ENCODE measurements at regions of chr6 and their contacts with region 1.

Region 1: DNA sequence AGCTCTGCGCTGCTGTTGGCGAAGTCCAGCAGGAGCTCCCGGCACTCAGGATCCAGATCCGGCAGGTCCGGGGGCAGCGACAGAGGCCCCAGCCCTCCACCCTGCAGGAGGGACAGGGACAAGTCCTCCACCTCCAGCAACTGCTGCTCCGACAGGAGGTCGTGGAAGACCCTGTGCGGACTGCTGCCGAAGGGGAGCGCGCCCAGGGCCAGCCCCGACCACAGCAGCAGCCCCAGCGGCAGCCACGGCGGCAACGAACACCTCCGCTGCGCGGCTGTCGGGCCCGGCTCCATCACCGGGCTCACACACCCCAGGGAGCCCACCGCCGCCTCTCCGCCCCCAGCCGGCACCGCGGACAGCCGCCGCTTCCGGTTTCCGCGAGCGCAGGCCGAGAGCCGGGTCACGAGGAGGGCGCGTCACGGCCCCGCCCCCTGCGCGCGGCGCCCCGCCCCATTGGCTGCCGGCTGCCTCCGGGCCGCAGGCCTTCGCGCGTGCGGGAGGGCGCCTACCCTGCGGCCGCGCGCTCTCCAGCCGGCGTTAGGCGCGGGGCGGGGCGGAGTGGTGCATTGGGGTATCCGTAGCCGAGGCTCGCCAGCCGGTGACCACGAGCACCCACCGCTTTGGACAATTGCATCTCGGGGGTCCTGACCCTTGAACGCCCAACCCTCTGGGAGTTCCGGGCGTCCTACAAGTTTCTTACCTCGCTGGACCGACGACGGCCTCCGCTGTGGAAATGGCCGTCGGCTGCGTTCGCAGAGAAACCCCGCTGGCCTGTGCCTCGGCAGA is at the start of gene OSTM1:
- DNase-seq: peak; percentile 32 to 95
- H3K4me3 ChIP-seq: peak within 1 kb of the TSS; percentile 87 to 89
- H3K27ac ChIP-seq: peak within 1 kb of the TSS; percentile 74 to 78
- H3K4me1 ChIP-seq: peaks cover 3 to 10% of the 10 kb centered on the region in 2 donors
- H3K27me3 ChIP-seq: no peaks in the 10 kb centered on the region
- CTCF ChIP-seq: no peak
- total RNA-seq, gene OSTM1: 78.7 TPM

Region 2: GRCh38 chr6:108260809-108261569 is 186.4 kb after region 1 on chr6 and contains the start of gene SNX3:
- intact Hi-C with region 1: loop called (anchors 5 kb)
- DNase-seq: peak; percentile 91 to 98
- H3K4me3 ChIP-seq: peak within 1 kb of the TSS; percentile 88 to 91
- H3K27ac ChIP-seq: peak within 1 kb of the TSS; percentile 93 to 95
- H3K4me1 ChIP-seq: peaks cover 0 to 12% of the 10 kb centered on the region in 2 donors
- H3K27me3 ChIP-seq: no peaks in the 10 kb centered on the region
- CTCF ChIP-seq: no peak
- total RNA-seq, gene SNX3: 112 TPM

Region 3: GRCh38 chr6:108294727-108295625 is 220.4 kb after region 1 on chr6 and contains the start of gene AFG1L:
- intact Hi-C with region 1: loop called (anchors 10 kb)
- DNase-seq: peak; percentile 75 to 95
- H3K4me3 ChIP-seq: peak within 1 kb of the TSS; percentile 72 to 91
- H3K27ac ChIP-seq: peak within 1 kb of the TSS; percentile 74 to 90
- H3K4me1 ChIP-seq: peaks cover 4 to 5% of the 10 kb centered on the region in 2 donors
- H3K27me3 ChIP-seq: no peaks in the 10 kb centered on the region
- CTCF ChIP-seq: peak in 1 of 3 experiments; percentile 2
- total RNA-seq, gene AFG1L: 0.53 TPM

Region 4: GRCh38 chr6:109073344-109074132 is 999.0 kb after region 1 on chr6:
- intact Hi-C with region 1: loop called (anchors 10 kb)
- DNase-seq: no peak
- H3K4me3 ChIP-seq: no peak overlapping the region
- H3K27ac ChIP-seq: no peak overlapping the region
- H3K4me1 ChIP-seq: peaks cover 0 to 3% of the 10 kb centered on the region in 2 donors
- H3K27me3 ChIP-seq: no peaks in the 10 kb centered on the region
- CTCF ChIP-seq: peak; percentile 45 to 68 (median 63)